ENCODE measurements at regions of chr4 and their contacts with region 1.

Region 1: GRCh38 chr4:45453258-45453853 is 670.5 kb downstream of the GABRG1 start:
- DNase-seq: peak in 1 of 2 experiments; percentile 24
- H3K4me3 ChIP-seq: no peak overlapping the region
- H3K4me3 Mint-ChIP-seq: no peak overlapping the region
- H3K27ac Mint-ChIP-seq: no peak overlapping the region
- H3K4me1 ChIP-seq: no peaks in the 10 kb centered on the region
- H3K4me1 Mint-ChIP-seq: no peaks in the 10 kb centered on the region
- H3K27me3 ChIP-seq: no peaks in the 10 kb centered on the region
- H3K27me3 Mint-ChIP-seq: no peaks in the 10 kb centered on the region
- CTCF ChIP-seq: peak in 1 of 2 experiments; percentile 50

Region 2: DNA sequence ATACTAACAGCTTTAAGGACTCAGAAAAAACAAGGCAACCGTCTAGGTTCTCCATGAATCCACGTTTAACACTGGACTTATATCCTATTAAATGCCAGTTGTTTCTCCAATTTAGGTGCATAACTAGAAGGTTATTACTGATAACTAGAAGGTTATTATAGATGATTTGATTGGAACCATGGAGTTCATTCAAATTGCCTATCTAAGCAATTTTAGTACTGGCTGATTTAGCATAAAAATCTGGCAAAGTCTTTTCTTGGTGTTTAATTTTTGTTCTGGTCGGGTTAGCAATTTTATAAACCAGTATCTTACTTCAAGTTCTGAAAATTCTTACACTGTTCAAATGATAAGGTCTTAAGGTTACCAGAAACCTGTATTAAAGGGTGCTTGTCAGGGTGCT is 54.2 kb before region 1 on chr4:
- CTCF ChIA-PET with region 1: no interaction called
- POLR2A ChIA-PET with region 1: no interaction called
- intact Hi-C with region 1: no loop called
- DNase-seq: no peak
- H3K4me3 ChIP-seq: no peak overlapping the region
- H3K4me3 Mint-ChIP-seq: no peak overlapping the region
- H3K27ac Mint-ChIP-seq: no peak overlapping the region
- H3K4me1 ChIP-seq: no peaks in the 10 kb centered on the region
- H3K4me1 Mint-ChIP-seq: no peaks in the 10 kb centered on the region
- H3K27me3 ChIP-seq: no peaks in the 10 kb centered on the region
- H3K27me3 Mint-ChIP-seq: no peaks in the 10 kb centered on the region
- CTCF ChIP-seq: no peak

Region 3: GRCh38 chr4:45566896-45567603 is 113.7 kb after region 1 on chr4:
- CTCF ChIA-PET with region 1: no interaction called
- POLR2A ChIA-PET with region 1: no interaction called
- intact Hi-C with region 1: no loop called
- DNase-seq: no peak
- H3K4me3 ChIP-seq: no peak overlapping the region
- H3K4me3 Mint-ChIP-seq: no peak overlapping the region
- H3K27ac Mint-ChIP-seq: no peak overlapping the region
- H3K4me1 ChIP-seq: no peaks in the 10 kb centered on the region
- H3K4me1 Mint-ChIP-seq: no peaks in the 10 kb centered on the region
- H3K27me3 ChIP-seq: no peaks in the 10 kb centered on the region
- H3K27me3 Mint-ChIP-seq: no peaks in the 10 kb centered on the region
- CTCF ChIP-seq: no peak

Region 4: DNA sequence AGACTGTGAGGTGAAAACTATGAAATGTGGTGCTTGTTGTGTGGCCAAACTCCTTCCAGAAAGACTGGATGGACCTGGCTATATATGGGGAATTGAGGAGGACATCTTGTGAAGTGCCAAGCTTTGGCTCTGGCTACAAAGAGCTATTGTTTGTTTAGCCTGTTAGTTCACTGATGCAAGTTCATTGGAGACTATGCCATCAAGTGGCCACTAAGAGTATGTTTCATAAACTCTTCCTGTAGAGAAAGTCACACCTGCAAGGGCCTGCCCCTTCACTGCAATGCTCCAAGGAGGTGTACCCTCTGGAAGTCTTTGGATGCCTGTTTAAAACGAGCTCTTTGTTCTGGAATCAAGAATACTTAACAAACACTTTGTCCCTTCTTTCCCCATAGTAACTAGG is 288.5 kb after region 1 on chr4:
- CTCF ChIA-PET with region 1: interaction called, 6 read pairs
- POLR2A ChIA-PET with region 1: no interaction called
- intact Hi-C with region 1: loop called (anchors 1 kb)
- DNase-seq: peak in 1 of 2 experiments; percentile 2
- H3K4me3 ChIP-seq: no peak overlapping the region
- H3K4me3 Mint-ChIP-seq: no peak overlapping the region
- H3K27ac Mint-ChIP-seq: no peak overlapping the region
- H3K4me1 ChIP-seq: no peaks in the 10 kb centered on the region
- H3K4me1 Mint-ChIP-seq: no peaks in the 10 kb centered on the region
- H3K27me3 ChIP-seq: no peaks in the 10 kb centered on the region
- H3K27me3 Mint-ChIP-seq: peaks cover 3% of the 10 kb centered on the region
- CTCF ChIP-seq: peak in 1 of 2 experiments; percentile 14

Measured in Caco-2 (cell line).